Activated T-helper 2 cell treated with anti-CD3 and anti-CD28 coated beads, Interferon-gamma antibody, Interleukin-2, Interleukin-4, amounts not matched to agents 10 μg/mL and 5 μg/mL and 100 μg/mL, durations not matched to agents 14 hours and 24 hours and 36 hours (primary cell): ENCODE measurements at regions of chr15 and their contacts with region 1.

Region 1: DNA sequence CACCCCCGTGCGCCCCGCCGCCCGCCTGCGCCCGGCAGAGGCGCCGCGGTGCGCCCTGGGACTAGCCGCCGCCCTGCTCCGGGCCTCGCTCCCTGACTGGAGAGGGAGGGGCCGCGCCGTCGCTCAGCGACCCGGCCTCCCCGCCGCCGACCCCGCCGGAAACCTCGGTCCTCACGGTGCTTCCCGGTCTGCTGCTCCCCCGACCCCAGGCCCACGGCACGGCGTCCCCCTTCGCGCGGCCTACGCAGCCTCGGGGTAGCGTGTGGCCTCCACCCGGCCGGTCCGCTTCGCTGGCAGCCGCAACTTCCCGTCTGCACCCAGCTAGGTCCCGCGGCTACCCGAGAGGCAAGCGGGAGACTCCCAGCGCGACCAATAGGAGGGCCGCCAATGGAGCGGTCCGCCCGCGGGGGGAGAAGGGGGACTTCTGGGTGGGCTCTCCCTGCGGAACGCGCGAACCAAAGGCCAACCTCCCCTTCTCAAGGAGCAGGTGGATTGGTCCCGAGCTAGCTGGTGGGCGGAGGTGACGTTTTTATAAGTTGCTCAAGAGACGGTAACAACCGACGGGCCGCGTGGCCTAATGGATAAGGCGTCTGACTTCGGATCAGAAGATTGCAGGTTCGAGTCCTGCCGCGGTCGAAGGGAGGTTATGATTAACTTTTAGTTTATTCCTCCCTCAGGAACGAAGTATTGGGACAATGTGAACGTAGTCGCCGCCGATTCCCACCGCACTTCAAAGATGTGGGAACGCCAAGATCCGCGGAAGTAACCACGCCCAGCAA is at the start of gene POLG:
- DNase-seq: peak; percentile 98
- H3K4me3 Mint-ChIP-seq: peak within 1 kb of the TSS; percentile 81
- H3K27ac Mint-ChIP-seq: peak within 1 kb of the TSS; percentile 85
- H3K4me1 Mint-ChIP-seq: peaks cover 51% of the 10 kb centered on the region
- H3K27me3 Mint-ChIP-seq: peaks cover 5% of the 10 kb centered on the region
- total RNA-seq, gene POLG: 124 and 131 TPM in 2 replicates

Region 2: DNA sequence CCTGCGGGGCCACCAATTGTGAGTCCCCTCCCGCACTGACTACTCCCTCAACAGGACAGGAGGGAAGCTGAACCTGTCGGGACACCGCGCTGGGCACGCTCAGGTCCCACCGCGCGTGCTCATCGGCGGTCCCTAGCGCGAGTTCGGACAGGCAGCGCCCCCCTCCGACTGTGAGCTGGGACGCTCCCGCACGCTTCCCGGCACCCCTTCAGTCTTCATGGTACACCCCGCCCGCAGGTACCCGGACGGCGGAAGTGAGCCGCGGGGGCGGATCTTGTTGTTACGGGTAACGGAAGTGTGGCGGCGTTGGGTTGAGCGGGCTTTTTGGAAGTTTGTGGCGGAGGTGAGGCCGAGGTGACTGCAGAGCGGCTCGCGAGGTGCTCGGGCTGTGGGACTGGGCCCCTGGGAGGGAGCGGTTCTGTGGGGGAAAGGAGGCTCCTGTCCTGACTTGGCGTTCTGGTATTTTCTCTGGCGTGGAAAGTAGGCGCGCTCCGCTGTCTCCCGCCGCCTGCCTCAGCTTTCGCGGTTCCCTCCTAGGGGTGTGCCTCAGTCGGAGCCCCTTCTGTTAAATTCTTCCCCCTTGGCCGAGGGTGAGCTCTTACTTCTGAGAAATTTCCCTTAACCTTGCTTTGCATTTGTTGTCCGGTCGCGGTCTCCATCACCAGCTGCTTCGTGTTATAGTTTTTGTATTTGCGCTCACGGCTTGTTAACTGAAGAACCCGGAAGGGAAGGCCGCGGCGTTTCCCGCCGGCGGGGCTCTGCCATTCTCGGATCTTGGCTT is 90.8 kb before region 1 on chr15 and contains the start of gene FANCI:
- intact Hi-C with region 1: loop called (anchors 1 kb)
- DNase-seq: peak; percentile 94
- H3K4me3 Mint-ChIP-seq: peak within 1 kb of the TSS; percentile 95
- H3K27ac Mint-ChIP-seq: peak within 1 kb of the TSS; percentile 89
- H3K4me1 Mint-ChIP-seq: peaks cover 37% of the 10 kb centered on the region
- H3K27me3 Mint-ChIP-seq: peaks cover 4% of the 10 kb centered on the region
- total RNA-seq, gene FANCI: 176 and 184 TPM in 2 replicates

Region 3: DNA sequence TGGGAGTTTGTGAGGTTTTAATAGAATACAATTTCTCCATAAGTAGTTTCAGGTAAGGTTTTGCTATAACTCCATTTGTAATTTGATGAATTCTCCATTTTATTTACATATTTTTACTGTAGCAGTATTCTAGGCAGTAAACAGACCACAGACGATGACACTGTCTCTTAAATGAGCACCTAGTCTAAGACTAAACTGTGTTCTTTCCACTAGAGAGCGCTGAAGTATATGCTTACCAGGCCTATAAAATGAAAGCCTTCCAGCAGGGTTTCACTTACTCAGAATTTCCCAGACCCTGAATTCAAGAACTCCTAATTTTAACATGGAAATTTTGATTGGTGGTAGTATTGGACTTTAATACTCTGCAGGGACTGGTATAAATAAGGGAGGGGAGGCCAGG is 41.7 kb before region 1 on chr15:
- intact Hi-C with region 1: loop called (anchors 5 kb)
- DNase-seq: no peak
- H3K4me3 Mint-ChIP-seq: no peak overlapping the region
- H3K27ac Mint-ChIP-seq: no peak overlapping the region
- H3K4me1 Mint-ChIP-seq: peaks cover 11% of the 10 kb centered on the region
- H3K27me3 Mint-ChIP-seq: no peaks in the 10 kb centered on the region

Region 4: DNA sequence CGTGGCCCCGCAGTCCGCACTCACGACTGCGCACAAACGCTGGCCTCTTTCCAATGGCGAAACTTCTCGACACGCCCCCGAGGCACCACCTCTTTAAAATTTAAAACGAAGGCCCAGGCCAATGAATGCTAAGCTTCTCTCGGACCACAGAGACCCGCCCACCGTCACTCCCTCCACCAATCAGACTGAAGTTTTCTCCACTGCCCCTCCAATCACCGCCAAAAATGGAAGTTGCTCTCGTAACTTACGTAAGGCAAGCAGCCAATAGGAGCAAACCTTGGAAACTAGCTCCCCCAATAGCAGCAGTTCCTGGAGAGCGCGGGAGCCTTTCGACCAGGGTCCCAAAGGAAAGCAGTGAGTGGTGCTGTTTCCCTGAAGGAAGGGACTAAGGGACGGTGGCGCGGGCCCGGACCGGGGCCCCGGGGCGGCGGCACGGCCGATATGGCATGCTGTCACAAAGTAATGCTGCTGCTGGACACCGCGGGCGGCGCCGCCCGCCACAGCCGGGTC is 240.5 kb after region 1 on chr15 and contains the start of gene TICRR:
- intact Hi-C with region 1: loop called (anchors 2 kb)
- DNase-seq: peak; percentile 97
- H3K4me3 Mint-ChIP-seq: peak within 1 kb of the TSS; percentile 92
- H3K27ac Mint-ChIP-seq: peak within 1 kb of the TSS; percentile 77
- H3K4me1 Mint-ChIP-seq: peaks cover 28% of the 10 kb centered on the region
- H3K27me3 Mint-ChIP-seq: peaks cover 14% of the 10 kb centered on the region
- total RNA-seq, gene TICRR: 18.0 and 18.7 TPM in 2 replicates